SK-N-SH (cell line): ENCODE measurements at regions of chr14 and their contacts with region 1.

Region 1: GRCh38 chr14:50714450-50715073 is 46.5 kb upstream of the SAV1 start:
- DNase-seq: peak; percentile 29
- H3K4me3 ChIP-seq: no peak overlapping the region
- H3K27ac ChIP-seq: no peak overlapping the region
- H3K4me1 ChIP-seq: peaks cover 0 to 3% of the 10 kb centered on the region in 2 experiments; a peak in 2 of 4 replicates
- H3K27me3 ChIP-seq: no peaks in the 10 kb centered on the region
- CTCF ChIP-seq: peak; percentile 68
- EP300 ChIP-seq: no peak
- RAD21 ChIP-seq: peak; percentile 52

Region 2: DNA sequence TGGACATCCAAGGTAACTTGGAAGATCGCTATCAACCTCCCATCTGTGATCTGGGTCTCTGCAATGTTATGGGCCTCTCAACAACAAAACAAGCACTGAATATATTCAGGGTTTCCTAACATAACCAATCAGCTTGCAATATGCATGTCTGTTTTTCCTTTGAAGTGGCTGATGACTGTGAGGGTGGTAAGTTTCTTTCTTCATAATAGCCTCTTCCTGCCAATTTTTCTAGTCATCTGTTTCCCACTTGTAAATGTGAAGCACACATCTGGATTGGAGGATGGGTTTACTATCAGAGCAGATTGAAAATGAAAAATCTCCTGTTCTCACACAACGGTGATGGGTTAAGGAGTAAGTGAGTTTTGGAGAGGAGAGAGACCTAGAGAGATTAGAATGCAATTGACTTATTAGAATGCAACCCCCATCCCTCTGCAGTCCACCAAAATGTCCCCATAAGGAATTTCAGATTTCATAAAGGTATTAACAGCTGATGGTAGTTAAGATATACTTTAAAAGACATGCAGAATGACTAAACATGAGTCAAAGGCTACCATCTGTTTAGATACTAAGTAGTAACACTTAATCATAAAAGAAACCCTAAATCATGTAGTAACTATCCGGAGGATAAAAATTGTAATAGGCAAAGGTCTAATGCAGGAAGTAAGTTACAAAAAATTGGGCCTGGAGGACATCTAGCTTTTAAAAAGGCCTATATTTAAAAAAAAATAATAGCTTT is 12.0 kb after region 1 on chr14:
- CTCF ChIA-PET with region 1: interaction called, 12 read pairs
- POLR2A ChIA-PET with region 1: no interaction called
- DNase-seq: no peak
- H3K4me3 ChIP-seq: no peak overlapping the region
- H3K27ac ChIP-seq: peak overlapping the region in 1 of 2 experiments; percentile 5; a peak in 2 of 4 replicates
- H3K4me1 ChIP-seq: no peaks in the 10 kb centered on the region; a peak in 2 of 4 replicates
- H3K27me3 ChIP-seq: no peaks in the 10 kb centered on the region
- CTCF ChIP-seq: no peak
- EP300 ChIP-seq: no peak
- RAD21 ChIP-seq: no peak

Region 3: DNA sequence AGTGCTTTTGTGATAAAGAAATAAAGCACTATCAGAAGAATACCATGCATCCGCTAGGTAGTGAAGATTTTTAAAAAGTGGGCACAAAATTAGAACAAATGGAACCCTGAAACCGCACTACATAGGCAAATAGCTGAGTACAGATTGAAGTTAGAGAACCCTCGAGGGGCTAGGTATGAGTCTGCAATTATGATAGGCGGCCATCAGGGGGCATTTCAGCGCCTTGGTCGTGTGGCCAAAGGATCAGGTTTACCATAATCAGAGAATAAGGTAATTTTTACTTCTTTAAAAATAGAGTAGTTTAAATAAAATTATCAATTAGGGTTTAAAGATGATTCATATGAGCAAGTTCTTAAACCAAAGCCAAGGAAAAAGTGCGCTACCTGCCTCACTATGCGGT is 655.3 kb after region 1 on chr14:
- CTCF ChIA-PET with region 1: no interaction called
- POLR2A ChIA-PET with region 1: no interaction called
- DNase-seq: no peak
- H3K4me3 ChIP-seq: no peak overlapping the region; a peak in 1 of 4 replicates
- H3K27ac ChIP-seq: no peak overlapping the region
- H3K4me1 ChIP-seq: peaks cover 0 to 2% of the 10 kb centered on the region in 2 experiments; a peak in 3 of 4 replicates
- H3K27me3 ChIP-seq: no peaks in the 10 kb centered on the region
- CTCF ChIP-seq: peak; percentile 36
- EP300 ChIP-seq: no peak
- RAD21 ChIP-seq: peak; percentile 55